Common myeloid progenitor, CD34-positive (primary cell): ENCODE measurements at regions of chr3 and their contacts with region 1.

Region 1: DNA sequence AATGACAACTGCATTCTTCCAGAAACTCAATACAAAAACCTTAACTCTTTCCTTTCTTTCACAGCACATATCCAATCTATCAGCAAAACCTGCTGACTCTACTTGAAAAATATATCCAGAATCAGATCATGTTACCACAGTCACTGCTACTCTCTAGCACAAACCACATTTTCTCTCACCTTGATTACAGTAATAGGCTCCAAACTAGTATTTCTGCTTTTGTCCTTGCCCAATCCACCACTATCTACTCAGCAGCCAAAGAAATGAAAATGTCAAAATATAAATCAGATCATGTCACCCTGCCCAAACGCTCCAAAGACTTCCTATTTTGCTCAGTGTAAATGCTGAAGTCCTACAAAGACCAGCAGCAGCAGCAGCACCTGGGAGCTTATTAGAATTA is 15.1 kb downstream of the TMCC1 start:
- DNase-seq: no peak
- H3K4me3 ChIP-seq: no peak overlapping the region
- H3K27ac ChIP-seq: no peak overlapping the region
- H3K4me1 ChIP-seq: peaks cover 0 to 10% (median 6%) of the 10 kb centered on the region in 4 experiments
- H3K27me3 ChIP-seq: no peaks in the 10 kb centered on the region

Region 2: DNA sequence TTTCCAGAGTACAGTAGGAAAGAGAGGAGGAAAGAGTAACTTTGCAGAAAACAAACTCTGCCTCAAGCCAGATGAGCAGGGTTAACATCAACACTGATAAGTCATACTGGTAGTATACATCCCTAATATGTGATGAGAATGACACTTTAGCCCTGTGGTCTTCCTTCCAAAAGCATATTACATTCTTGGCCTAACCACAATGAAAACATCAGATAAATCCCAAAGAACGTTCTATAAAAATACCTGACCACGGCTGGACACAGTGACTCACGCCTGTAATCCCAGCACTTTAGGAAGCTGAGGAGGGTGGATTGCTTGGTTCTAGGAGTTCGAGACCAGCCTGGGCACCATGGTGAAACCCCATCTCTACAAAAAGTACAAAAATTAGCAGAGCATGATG is 10.4 kb after region 1 on chr3:
- CTCF ChIA-PET with region 1: interaction called, 12 read pairs
- POLR2A ChIA-PET with region 1: interaction called, 3 read pairs
- DNase-seq: no peak
- H3K4me3 ChIP-seq: no peak overlapping the region
- H3K27ac ChIP-seq: no peak overlapping the region
- H3K4me1 ChIP-seq: peaks cover 23 to 46% (median 33%) of the 10 kb centered on the region in 4 experiments
- H3K27me3 ChIP-seq: no peaks in the 10 kb centered on the region

Region 3: GRCh38 chr3:129961134-129961541 is 82.8 kb after region 1 on chr3:
- CTCF ChIA-PET with region 1: no interaction called
- POLR2A ChIA-PET with region 1: no interaction called
- DNase-seq: no peak
- H3K4me3 ChIP-seq: no peak overlapping the region
- H3K27ac ChIP-seq: no peak overlapping the region
- H3K4me1 ChIP-seq: peaks cover 0 to 8% (median 4%) of the 10 kb centered on the region in 4 experiments
- H3K27me3 ChIP-seq: no peaks in the 10 kb centered on the region